ENCODE measurements at regions of chr10 and their contacts with region 1.

Region 1: GRCh38 chr10:32263300-32263699 is 83.7 kb downstream of the EPC1 start:
- DNase-seq: no peak
- H3K4me3 ChIP-seq: no peak overlapping the region
- H3K27ac ChIP-seq: no peak overlapping the region
- H3K4me1 ChIP-seq: peaks cover 1% of the 10 kb centered on the region
- H3K27me3 ChIP-seq: no peaks in the 10 kb centered on the region
- CTCF ChIP-seq: no peak
- EP300 ChIP-seq: no peak
- POLR2A ChIP-seq: no peak

Region 2: DNA sequence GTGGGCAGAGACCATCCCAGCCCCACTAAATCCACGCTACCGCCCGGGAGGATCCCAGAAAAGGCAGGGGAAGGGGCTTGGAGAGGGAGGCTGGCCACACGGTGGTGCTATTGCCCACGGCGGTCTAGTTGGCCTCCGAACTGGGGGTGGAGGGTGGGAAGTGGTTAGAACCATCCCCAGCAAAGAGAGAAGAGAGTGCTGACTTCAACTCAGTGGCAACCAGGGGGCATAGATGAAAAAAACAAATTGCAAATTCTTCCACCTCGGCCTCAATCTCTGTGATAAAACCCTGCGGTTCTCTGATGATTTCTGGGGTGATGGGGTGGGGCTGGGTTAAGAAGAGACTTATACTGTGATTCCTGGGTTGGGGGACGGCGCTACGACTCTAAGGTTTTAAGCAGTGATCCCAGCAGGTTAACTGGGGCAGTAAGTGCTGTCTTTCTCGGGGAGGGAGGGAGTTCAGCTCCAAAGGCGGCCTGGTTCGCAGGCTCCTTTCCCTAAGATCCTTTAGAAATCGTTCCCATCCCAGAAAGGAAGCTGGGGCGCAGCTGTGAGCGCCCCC is 1479.3 kb before region 1 on chr10:
- intact Hi-C with region 1: no loop called
- DNase-seq: peak; percentile 87 to 93 (median 91)
- H3K4me3 ChIP-seq: peak overlapping the region; percentile 42
- H3K27ac ChIP-seq: peak overlapping the region; percentile 89 to 95
- H3K4me1 ChIP-seq: no peaks in the 10 kb centered on the region
- H3K27me3 ChIP-seq: no peaks in the 10 kb centered on the region
- CTCF ChIP-seq: peak; percentile 72 to 93 (median 88)
- EP300 ChIP-seq: no peak
- POLR2A ChIP-seq: no peak

Region 3: GRCh38 chr10:32332299-32332750 is 69.0 kb after region 1 on chr10:
- intact Hi-C with region 1: loop called in 1 of 4 experiments (anchors 10 kb)
- DNase-seq: no peak
- H3K4me3 ChIP-seq: no peak overlapping the region
- H3K27ac ChIP-seq: no peak overlapping the region
- H3K4me1 ChIP-seq: peaks cover 23% of the 10 kb centered on the region
- H3K27me3 ChIP-seq: no peaks in the 10 kb centered on the region
- CTCF ChIP-seq: no peak
- EP300 ChIP-seq: no peak
- POLR2A ChIP-seq: no peak

Region 4: DNA sequence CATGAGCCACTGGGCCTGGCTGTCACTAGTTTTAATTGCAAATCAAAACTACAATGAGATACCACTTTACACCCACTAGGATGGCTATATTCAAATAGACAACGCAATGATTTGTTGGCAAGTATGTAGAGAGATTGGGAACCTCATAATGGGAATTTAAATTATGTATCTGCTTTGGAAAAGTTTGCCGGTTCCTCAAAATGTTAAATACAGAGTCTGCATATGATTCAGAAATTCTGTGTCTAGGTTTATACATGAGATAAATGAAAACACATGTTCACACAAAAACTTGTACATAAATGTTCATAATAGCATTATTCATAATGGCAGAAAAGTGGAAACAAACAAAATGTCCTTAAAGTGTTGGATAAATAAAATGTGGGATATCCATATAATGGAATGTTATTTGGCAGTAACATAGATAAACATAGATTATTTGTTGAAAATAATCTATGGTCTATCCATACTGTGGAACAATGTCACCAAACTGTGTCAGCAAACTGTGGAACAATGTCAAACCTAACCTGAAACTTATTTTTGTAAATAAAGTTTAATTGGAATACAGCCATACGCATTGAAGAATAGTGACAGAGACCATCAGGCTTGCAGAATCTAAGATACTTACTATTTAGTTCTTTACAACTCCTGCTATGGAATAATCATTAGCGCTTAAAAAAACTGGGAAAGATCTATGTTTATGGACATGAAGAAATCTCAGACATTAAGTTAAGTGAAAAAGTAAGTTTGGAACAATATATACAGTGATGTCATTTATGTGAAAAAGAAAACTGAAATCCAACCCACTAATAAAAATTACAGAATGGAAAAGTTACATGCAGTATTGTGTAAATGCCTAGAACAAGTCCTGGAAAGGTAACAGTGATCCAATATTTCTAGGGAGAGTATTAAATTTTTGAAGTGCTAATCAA is 253.5 kb after region 1 on chr10:
- intact Hi-C with region 1: no loop called
- DNase-seq: no peak
- H3K4me3 ChIP-seq: no peak overlapping the region
- H3K27ac ChIP-seq: no peak overlapping the region
- H3K4me1 ChIP-seq: no peaks in the 10 kb centered on the region
- H3K27me3 ChIP-seq: no peaks in the 10 kb centered on the region
- CTCF ChIP-seq: no peak
- EP300 ChIP-seq: no peak
- POLR2A ChIP-seq: no peak

Measured in ovary (tissue), 10 donors.